Activated B cell treated with CpG ODN at 0.5 μM for 24 hours (primary cell): ENCODE measurements at regions of chr17 and their contacts with region 1.

Region 1: DNA sequence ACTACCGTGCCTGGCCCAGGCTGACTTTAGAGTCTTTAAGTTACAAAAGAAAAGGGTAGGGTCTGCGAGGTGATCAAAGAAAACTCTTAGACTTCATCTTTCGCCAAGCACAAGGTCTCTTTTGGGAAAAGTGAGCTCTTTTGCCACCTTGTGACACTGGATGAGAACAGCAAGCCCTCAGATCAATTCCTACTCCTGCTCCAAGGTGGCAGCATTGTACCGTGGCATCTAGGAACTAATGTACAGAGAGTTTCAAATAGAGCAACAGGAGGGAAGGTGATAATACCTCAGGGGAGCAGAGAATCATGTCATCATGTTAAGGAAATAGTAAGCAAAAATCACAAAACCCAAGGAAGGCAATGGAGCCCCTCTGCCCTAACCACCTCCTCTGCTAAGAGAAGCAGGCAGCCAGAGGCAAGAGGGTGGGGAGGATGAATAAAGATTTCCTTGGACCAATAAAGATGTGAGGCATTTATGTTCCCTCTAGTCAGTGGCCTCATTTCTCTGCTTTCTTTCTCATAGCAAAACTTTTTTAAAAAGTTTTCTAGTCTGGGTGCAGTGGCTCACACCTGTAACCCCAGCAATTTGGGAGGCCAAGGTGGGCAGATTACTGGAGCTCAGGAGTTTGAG is 2.1 kb upstream of the C17orf78 start:
- DNase-seq: peak; percentile 22
- ATAC-seq: peak; percentile 92
- H3K4me3 Mint-ChIP-seq: no peak overlapping the region
- H3K27ac Mint-ChIP-seq: no peak overlapping the region
- H3K4me1 Mint-ChIP-seq: peaks cover 4% of the 10 kb centered on the region
- H3K27me3 Mint-ChIP-seq: no peaks in the 10 kb centered on the region
- CTCF ChIP-seq: no peak

Region 2: GRCh38 chr17:37265446-37266173 is 108.0 kb before region 1 on chr17:
- CTCF ChIA-PET with region 1: no interaction called
- POLR2A ChIA-PET with region 1: no interaction called
- intact Hi-C with region 1: no loop called
- DNase-seq: no peak
- ATAC-seq: no peak
- H3K4me3 Mint-ChIP-seq: no peak overlapping the region
- H3K27ac Mint-ChIP-seq: no peak overlapping the region
- H3K4me1 Mint-ChIP-seq: no peaks in the 10 kb centered on the region
- H3K27me3 Mint-ChIP-seq: no peaks in the 10 kb centered on the region
- CTCF ChIP-seq: no peak

Region 3: GRCh38 chr17:37299257-37299980 is 74.2 kb before region 1 on chr17:
- CTCF ChIA-PET with region 1: no interaction called
- POLR2A ChIA-PET with region 1: no interaction called
- intact Hi-C with region 1: no loop called
- DNase-seq: no peak
- ATAC-seq: no peak
- H3K4me3 Mint-ChIP-seq: no peak overlapping the region
- H3K27ac Mint-ChIP-seq: no peak overlapping the region
- H3K4me1 Mint-ChIP-seq: no peaks in the 10 kb centered on the region
- H3K27me3 Mint-ChIP-seq: no peaks in the 10 kb centered on the region
- CTCF ChIP-seq: no peak

Region 4: DNA sequence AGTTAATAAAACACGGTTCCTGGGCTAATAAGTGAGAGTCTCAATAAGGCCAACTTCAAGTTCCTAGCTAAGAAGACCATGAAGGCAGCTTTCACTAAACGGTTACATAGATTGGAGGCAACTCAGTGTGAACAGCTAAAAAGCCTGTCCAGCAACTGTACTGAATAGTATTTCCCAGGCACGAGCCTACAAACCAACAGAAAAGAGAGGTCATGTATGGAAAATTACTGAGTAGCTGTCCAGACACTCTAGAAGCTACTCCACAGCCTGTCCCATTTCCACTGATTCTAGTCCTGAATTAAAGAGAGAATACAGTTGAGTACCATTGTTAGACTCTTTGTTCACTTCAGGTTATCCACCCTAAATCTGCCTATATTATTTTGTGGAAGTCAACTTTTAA is 34.3 kb before region 1 on chr17:
- CTCF ChIA-PET with region 1: no interaction called
- POLR2A ChIA-PET with region 1: no interaction called
- intact Hi-C with region 1: no loop called
- DNase-seq: no peak
- ATAC-seq: no peak
- H3K4me3 Mint-ChIP-seq: no peak overlapping the region
- H3K27ac Mint-ChIP-seq: no peak overlapping the region
- H3K4me1 Mint-ChIP-seq: no peaks in the 10 kb centered on the region
- H3K27me3 Mint-ChIP-seq: no peaks in the 10 kb centered on the region
- CTCF ChIP-seq: no peak

Region 5: GRCh38 chr17:37392024-37392590 is 18.5 kb after region 1 on chr17:
- CTCF ChIA-PET with region 1: interaction called, 20 read pairs
- POLR2A ChIA-PET with region 1: no interaction called
- intact Hi-C with region 1: loop called (anchors 1 kb)
- DNase-seq: no peak
- ATAC-seq: no peak
- H3K4me3 Mint-ChIP-seq: no peak overlapping the region
- H3K27ac Mint-ChIP-seq: no peak overlapping the region
- H3K4me1 Mint-ChIP-seq: peaks cover 7% of the 10 kb centered on the region
- H3K27me3 Mint-ChIP-seq: no peaks in the 10 kb centered on the region
- CTCF ChIP-seq: no peak